ENCODE measurements at regions of chr16 and their contacts with region 1.

Region 1: GRCh38 chr16:57185944-57186871 is at the starts of genes PSME3IP1 and RSPRY1:
- DNase-seq: peak; percentile 100
- H3K4me3 ChIP-seq: peak within 1 kb of the TSS; percentile 96 to 99 (median 99)
- H3K27ac ChIP-seq: peak within 1 kb of the TSS; percentile 93
- H3K4me1 ChIP-seq: peaks cover 24% of the 10 kb centered on the region
- H3K27me3 ChIP-seq: no peaks in the 10 kb centered on the region
- CTCF ChIP-seq: no peak
- total RNA-seq, gene PSME3IP1: 43.2 to 90.0 TPM
- total RNA-seq, gene RSPRY1: 46.9 to 47.2 TPM

Region 2: DNA sequence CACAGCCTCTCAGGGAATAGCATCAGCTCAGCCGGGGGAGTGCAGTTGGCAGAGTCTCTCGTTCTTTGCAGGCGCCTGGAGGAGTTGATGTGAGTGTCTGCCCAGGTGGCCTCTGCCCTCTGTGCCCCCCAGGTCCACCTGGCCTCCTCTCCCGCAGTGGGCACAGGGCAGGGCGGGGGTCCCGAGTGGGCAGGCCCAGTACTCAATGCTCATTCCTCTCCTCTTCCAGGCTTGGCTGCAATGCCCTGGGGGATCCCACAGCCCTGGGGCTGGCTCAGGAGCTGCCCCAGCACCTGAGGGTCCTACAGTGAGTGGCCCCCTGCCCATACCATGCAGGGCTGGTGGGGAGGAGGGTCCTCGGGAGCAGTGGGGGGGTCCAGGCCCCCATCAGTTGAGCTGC is 108.5 kb before region 1 on chr16:
- CTCF ChIA-PET with region 1: no interaction called
- dilution Hi-C with region 1: loop called (anchors 5 kb)
- in situ Hi-C with region 1: no loop called
- intact Hi-C with region 1: no loop called
- DNase-seq: no peak
- H3K4me3 ChIP-seq: no peak overlapping the region
- H3K27ac ChIP-seq: no peak overlapping the region
- H3K4me1 ChIP-seq: no peaks in the 10 kb centered on the region
- H3K27me3 ChIP-seq: no peaks in the 10 kb centered on the region
- CTCF ChIP-seq: no peak

Region 3: DNA sequence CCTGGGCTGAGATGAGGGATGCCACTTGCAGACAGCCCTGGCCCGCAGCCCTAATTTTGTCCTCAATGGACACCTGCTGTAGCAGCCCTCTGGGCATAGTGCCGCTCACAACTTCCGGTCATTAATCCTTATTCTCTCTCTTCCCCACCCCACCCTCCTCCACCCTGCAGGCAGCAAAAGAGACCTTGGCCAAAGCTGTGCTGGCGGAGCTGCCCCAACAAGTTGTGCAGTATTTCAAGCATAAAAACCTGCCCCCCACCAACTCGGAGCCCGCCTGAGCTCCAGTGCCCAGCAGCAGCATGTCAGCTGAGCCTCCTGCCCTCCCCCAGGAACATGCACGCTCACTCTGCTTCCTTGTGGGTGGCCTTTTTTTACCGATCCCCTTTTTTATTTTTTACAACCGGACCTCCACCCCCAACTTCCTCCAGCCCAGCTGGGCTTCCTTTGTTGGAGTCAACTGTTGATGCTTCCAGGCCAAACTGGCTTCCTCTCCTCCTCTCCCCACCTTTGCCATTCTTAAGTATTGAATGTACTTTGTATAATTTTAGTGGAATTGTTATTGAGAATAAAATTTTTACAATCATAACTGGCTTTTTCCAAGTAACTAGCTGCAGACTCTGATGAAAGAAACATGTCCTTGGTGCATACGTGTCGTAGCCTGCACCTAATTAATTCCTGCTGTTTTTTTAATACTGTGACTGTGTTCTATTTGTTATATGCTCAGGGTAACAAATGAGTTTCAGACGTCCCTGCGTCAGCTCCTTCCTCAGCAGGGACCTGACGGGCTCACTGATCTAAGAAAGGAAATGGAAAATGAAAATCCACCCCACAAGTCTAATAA is 38.6 kb before region 1 on chr16:
- CTCF ChIA-PET with region 1: no interaction called
- dilution Hi-C with region 1: loop called (anchors 5 kb)
- in situ Hi-C with region 1: no loop called
- intact Hi-C with region 1: no loop called
- DNase-seq: no peak
- H3K4me3 ChIP-seq: no peak overlapping the region
- H3K27ac ChIP-seq: no peak overlapping the region
- H3K4me1 ChIP-seq: peaks cover 8% of the 10 kb centered on the region
- H3K27me3 ChIP-seq: no peaks in the 10 kb centered on the region
- CTCF ChIP-seq: no peak

Region 4: GRCh38 chr16:57213462-57213861 is 27.3 kb after region 1 on chr16:
- CTCF ChIA-PET with region 1: no interaction called
- dilution Hi-C with region 1: no loop called
- in situ Hi-C with region 1: no loop called
- intact Hi-C with region 1: loop called (anchors 1 kb)
- DNase-seq: peak; percentile 79
- H3K4me3 ChIP-seq: no peak overlapping the region
- H3K27ac ChIP-seq: peak overlapping the region; percentile 71
- H3K4me1 ChIP-seq: peaks cover 18% of the 10 kb centered on the region
- H3K27me3 ChIP-seq: no peaks in the 10 kb centered on the region
- CTCF ChIP-seq: no peak

Region 5: DNA sequence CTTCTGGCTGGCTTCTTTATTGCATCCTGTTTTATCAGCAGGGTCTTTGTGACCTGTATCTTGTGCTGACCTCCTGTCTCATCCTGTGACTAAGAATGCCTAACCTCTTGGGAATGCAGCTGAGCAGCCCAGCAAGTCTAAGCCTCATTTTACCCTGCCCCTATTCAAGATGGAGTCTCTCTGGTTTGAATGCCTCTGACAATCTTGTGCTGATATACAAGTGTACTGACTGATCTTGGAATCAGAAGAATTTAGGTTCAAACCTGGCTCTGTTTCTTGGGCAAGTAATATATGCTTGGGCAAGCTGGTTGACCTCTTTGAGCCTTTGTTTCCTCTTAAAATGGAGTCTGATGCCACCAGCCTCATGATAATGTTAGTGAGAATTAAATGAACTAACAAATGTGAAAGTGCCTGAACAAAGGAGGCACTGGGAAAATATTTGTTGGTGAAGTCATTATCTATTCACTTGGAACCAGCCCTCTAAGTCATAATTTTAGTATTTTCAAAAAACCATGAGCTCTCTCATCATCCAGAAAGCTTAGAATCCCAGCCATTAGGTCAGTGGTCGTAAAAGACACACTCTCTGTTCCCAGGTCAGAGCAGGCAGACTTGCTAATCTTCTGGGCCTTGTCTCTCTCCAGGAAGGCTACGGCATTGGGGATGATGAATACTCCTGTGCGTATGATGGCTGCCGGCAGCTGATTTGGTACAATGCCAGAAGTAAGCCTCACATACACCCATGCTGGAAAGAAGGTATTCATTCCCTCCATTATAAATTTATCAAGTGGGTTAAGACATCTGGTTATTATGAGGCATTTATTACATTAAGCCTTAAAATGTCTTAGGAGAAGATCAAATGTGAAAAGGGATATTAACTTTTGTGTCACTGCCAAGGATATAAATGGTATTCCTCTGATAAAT is 40.8 kb after region 1 on chr16:
- CTCF ChIA-PET with region 1: no interaction called
- dilution Hi-C with region 1: loop called (anchors 5 kb)
- in situ Hi-C with region 1: no loop called
- intact Hi-C with region 1: loop called (anchors 5 kb)
- DNase-seq: no peak
- H3K4me3 ChIP-seq: no peak overlapping the region
- H3K27ac ChIP-seq: peak overlapping the region; percentile 19
- H3K4me1 ChIP-seq: peaks cover 7% of the 10 kb centered on the region
- H3K27me3 ChIP-seq: no peaks in the 10 kb centered on the region
- CTCF ChIP-seq: no peak

Region 6: GRCh38 chr16:57244767-57245471 is 58.7 kb after region 1 on chr16 and contains the start of gene ARL2BP:
- CTCF ChIA-PET with region 1: no interaction called
- dilution Hi-C with region 1: no loop called
- in situ Hi-C with region 1: no loop called
- intact Hi-C with region 1: loop called (anchors 2 kb)
- DNase-seq: peak; percentile 98
- H3K4me3 ChIP-seq: peak within 1 kb of the TSS; percentile 73 to 77 (median 76)
- H3K27ac ChIP-seq: peak within 1 kb of the TSS; percentile 73
- H3K4me1 ChIP-seq: peaks cover 11% of the 10 kb centered on the region
- H3K27me3 ChIP-seq: no peaks in the 10 kb centered on the region
- CTCF ChIP-seq: peak in 1 of 2 donors; percentile 14
- total RNA-seq, gene ARL2BP: 70.2 to 82.4 TPM

Region 7: GRCh38 chr16:57260294-57260929 is 74.2 kb after region 1 on chr16:
- CTCF ChIA-PET with region 1: no interaction called
- dilution Hi-C with region 1: no loop called
- in situ Hi-C with region 1: no loop called
- intact Hi-C with region 1: no loop called
- DNase-seq: peak; percentile 84
- H3K4me3 ChIP-seq: no peak overlapping the region
- H3K27ac ChIP-seq: peak overlapping the region; percentile 54
- H3K4me1 ChIP-seq: peaks cover 47% of the 10 kb centered on the region
- H3K27me3 ChIP-seq: no peaks in the 10 kb centered on the region
- CTCF ChIP-seq: no peak

Region 8: DNA sequence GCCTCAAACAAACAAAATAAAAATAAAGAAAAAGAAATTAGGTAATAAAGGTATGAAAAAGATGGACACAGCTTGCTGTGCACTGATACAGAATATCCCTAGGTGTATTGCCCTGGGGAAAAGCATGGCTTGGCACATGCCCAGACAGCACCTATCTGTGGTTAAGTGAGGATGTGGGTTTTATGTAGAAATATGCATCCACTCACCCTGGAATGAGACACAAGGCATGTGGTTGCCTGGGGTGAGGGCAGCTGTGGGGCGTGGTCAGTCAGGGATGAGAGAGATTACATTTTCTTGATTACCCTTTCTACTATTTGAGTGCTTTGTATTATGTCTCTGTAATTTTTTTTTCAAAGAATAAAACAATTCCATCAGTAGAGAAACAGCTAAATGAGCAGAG is 91.4 kb after region 1 on chr16:
- CTCF ChIA-PET with region 1: no interaction called
- dilution Hi-C with region 1: no loop called
- in situ Hi-C with region 1: no loop called
- intact Hi-C with region 1: loop called (anchors 2 kb)
- DNase-seq: peak; percentile 96
- H3K4me3 ChIP-seq: no peak overlapping the region
- H3K27ac ChIP-seq: peak overlapping the region; percentile 80
- H3K4me1 ChIP-seq: peaks cover 36% of the 10 kb centered on the region
- H3K27me3 ChIP-seq: no peaks in the 10 kb centered on the region
- CTCF ChIP-seq: no peak